ENCODE measurements at regions of chr11 and their contacts with region 1.

Region 1: DNA sequence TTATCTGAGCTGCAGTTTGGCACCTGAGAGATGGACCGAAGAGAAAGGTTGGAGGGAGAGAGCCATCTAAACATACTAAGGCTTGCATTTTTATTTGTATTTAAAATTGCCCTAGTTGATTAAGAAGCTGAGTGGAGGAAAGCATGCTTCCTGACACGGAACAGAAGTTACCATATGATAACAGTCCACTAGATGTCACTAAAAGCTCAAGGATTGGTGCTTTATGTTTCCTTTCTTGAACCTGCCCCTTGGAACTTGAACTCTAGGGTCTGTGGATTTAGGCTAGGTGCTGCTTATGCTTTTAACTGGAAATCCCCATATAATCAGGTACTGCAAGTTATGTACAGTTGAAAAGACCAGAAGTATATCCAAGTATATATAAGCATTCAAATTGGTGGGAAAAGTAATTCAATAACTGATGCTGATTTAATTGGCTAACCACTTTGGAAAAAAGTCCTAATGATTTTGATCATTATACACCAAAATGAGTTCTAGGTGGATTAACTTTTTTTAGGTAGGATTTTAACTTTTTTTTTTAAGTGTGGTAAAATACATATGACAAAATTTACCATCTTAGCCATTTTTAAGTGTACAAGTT is 9.5 kb downstream of the RBMXL2 start:
- DNase-seq: peak; percentile 49
- ATAC-seq: peak; percentile 81
- H3K4me3 ChIP-seq: no peak overlapping the region
- H3K27ac ChIP-seq: no peak overlapping the region
- H3K4me1 ChIP-seq: no peaks in the 10 kb centered on the region
- H3K27me3 ChIP-seq: no peaks in the 10 kb centered on the region
- CTCF ChIP-seq: peak; percentile 82
- EP300 ChIP-seq: no peak
- POLR2A ChIP-seq: no peak
- RAD21 ChIP-seq: peak; percentile 65; the same call in 1 of the 2 replicates

Region 2: GRCh38 chr11:7278314-7278917 is 180.1 kb after region 1 on chr11:
- CTCF ChIA-PET with region 1: interaction called, 11 read pairs
- POLR2A ChIA-PET with region 1: no interaction called
- in situ Hi-C with region 1: no loop called
- intact Hi-C with region 1: loop called (anchors 2 kb)
- DNase-seq: peak; percentile 10
- ATAC-seq: peak; percentile 68
- H3K4me3 ChIP-seq: no peak overlapping the region
- H3K27ac ChIP-seq: no peak overlapping the region
- H3K4me1 ChIP-seq: no peaks in the 10 kb centered on the region
- H3K27me3 ChIP-seq: no peaks in the 10 kb centered on the region
- CTCF ChIP-seq: peak; percentile 49
- EP300 ChIP-seq: no peak
- POLR2A ChIP-seq: no peak
- RAD21 ChIP-seq: no peak

Region 3: DNA sequence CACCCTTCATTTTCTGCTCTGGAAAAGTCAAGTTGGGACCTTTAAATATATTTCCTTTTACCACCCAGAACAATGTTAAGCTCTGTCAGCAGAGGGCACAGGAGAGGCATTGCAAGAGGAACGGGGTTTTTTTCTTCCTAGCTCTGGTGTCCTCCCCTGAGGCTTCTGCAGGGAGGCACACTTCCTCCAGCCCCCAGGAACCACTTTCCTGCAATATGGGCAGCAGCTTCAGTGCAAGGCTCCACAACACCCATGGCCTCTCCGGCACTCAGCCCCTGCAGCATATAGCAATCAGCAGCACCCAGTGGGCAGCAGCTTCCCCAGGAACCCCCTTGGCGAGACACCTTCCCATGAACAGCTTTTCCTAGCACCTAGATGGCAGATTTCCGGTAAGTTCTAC is 254.8 kb after region 1 on chr11:
- CTCF ChIA-PET with region 1: no interaction called
- POLR2A ChIA-PET with region 1: no interaction called
- in situ Hi-C with region 1: no loop called
- intact Hi-C with region 1: loop called (anchors 5 kb)
- DNase-seq: peak; percentile 26
- ATAC-seq: peak; percentile 74
- H3K4me3 ChIP-seq: no peak overlapping the region
- H3K27ac ChIP-seq: no peak overlapping the region
- H3K4me1 ChIP-seq: no peaks in the 10 kb centered on the region
- H3K27me3 ChIP-seq: no peaks in the 10 kb centered on the region
- CTCF ChIP-seq: peak; percentile 67
- EP300 ChIP-seq: no peak
- POLR2A ChIP-seq: no peak
- RAD21 ChIP-seq: peak; percentile 39; the same call in 1 of the 2 replicates

Region 4: GRCh38 chr11:7442588-7443215 is 344.4 kb after region 1 on chr11:
- CTCF ChIA-PET with region 1: interaction called, 7 read pairs
- POLR2A ChIA-PET with region 1: no interaction called
- in situ Hi-C with region 1: loop called (anchors 10 kb)
- intact Hi-C with region 1: loop called (anchors 1 kb)
- DNase-seq: peak; percentile 43
- ATAC-seq: peak; percentile 93
- H3K4me3 ChIP-seq: no peak overlapping the region
- H3K27ac ChIP-seq: no peak overlapping the region
- H3K4me1 ChIP-seq: no peaks in the 10 kb centered on the region
- H3K27me3 ChIP-seq: peaks cover 0 to 5% of the 10 kb centered on the region in 2 experiments; a peak in 2 of 5 replicates
- CTCF ChIP-seq: peak; percentile 86
- EP300 ChIP-seq: no peak
- POLR2A ChIP-seq: no peak
- RAD21 ChIP-seq: peak; percentile 43; the same call in 1 of the 2 replicates

Region 5: GRCh38 chr11:7688238-7688826 is 590.0 kb after region 1 on chr11:
- CTCF ChIA-PET with region 1: interaction called, 5 read pairs
- POLR2A ChIA-PET with region 1: no interaction called
- in situ Hi-C with region 1: no loop called
- intact Hi-C with region 1: loop called (anchors 1 kb)
- DNase-seq: peak; percentile 16
- ATAC-seq: peak; percentile 38; the same call in 2 of the 3 replicates
- H3K4me3 ChIP-seq: no peak overlapping the region
- H3K27ac ChIP-seq: no peak overlapping the region
- H3K4me1 ChIP-seq: peaks cover 8% of the 10 kb centered on the region; the same call in 1 of the 2 replicates
- H3K27me3 ChIP-seq: peaks cover 0 to 25% of the 10 kb centered on the region in 2 experiments; a peak in 2 of 5 replicates
- CTCF ChIP-seq: peak; percentile 64
- EP300 ChIP-seq: no peak
- POLR2A ChIP-seq: no peak
- RAD21 ChIP-seq: no peak

Region 6: GRCh38 chr11:7703740-7704139 is 605.4 kb after region 1 on chr11:
- CTCF ChIA-PET with region 1: no interaction called
- POLR2A ChIA-PET with region 1: no interaction called
- in situ Hi-C with region 1: loop called (anchors 10 kb)
- intact Hi-C with region 1: no loop called
- DNase-seq: no peak
- ATAC-seq: no peak
- H3K4me3 ChIP-seq: no peak overlapping the region
- H3K27ac ChIP-seq: no peak overlapping the region
- H3K4me1 ChIP-seq: no peaks in the 10 kb centered on the region
- H3K27me3 ChIP-seq: peaks cover 0 to 3% of the 10 kb centered on the region in 2 experiments; a peak in 1 of 5 replicates
- CTCF ChIP-seq: no peak
- EP300 ChIP-seq: no peak
- POLR2A ChIP-seq: no peak
- RAD21 ChIP-seq: no peak

Region 7: GRCh38 chr11:8099291-8099899 is 1001.1 kb after region 1 on chr11:
- CTCF ChIA-PET with region 1: no interaction called
- POLR2A ChIA-PET with region 1: no interaction called
- in situ Hi-C with region 1: no loop called
- intact Hi-C with region 1: loop called (anchors 5 kb)
- DNase-seq: peak; percentile 48
- ATAC-seq: peak; percentile 80
- H3K4me3 ChIP-seq: no peak overlapping the region
- H3K27ac ChIP-seq: no peak overlapping the region
- H3K4me1 ChIP-seq: no peaks in the 10 kb centered on the region
- H3K27me3 ChIP-seq: no peaks in the 10 kb centered on the region
- CTCF ChIP-seq: peak; percentile 80
- EP300 ChIP-seq: no peak
- POLR2A ChIP-seq: no peak
- RAD21 ChIP-seq: peak; percentile 68